Dendritic cell treated with granulocyte-macrophage colony-stimulating factor and Interleukin-4, amounts not matched to agents 40 ng/mL and 50 ng/mL, for 4 days (primary cell): ENCODE measurements at regions of chr4 and their contacts with region 1.

Region 1: DNA sequence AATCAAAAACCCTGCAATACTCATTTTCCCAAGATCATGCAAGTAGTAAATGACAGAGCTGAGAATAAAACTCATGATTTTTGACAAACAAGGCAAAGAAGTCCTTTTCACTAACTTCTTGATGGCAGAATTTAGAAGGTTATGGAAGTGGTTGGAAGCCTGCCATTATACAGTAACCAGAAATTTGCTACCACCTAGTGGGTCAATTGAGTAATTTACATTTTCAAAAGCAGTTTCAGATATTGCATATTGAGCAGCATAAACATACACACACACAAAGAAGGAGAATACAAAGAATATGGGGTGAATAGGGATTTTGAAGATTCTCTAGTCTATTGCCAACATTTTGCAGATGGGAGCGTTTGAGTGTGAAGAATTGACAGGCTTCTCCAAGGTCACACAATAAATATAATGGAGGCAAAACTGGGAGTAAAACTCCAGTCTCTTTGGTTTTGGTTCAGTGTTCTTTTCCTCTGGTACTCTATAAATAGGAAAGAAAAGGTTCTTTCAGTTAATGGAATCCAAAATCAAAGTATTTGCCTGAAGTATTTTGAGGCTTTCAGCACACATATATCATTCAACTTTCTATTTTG is 70.2 kb downstream of the GC start:
- H3K4me3 Mint-ChIP-seq: no peak overlapping the region
- H3K27ac Mint-ChIP-seq: no peak overlapping the region
- H3K4me1 Mint-ChIP-seq: no peaks in the 10 kb centered on the region
- H3K27me3 Mint-ChIP-seq: no peaks in the 10 kb centered on the region

Region 2: GRCh38 chr4:70601422-70602039 is 1112.2 kb before region 1 on chr4:
- intact Hi-C with region 1: loop called (anchors 2 kb)
- H3K4me3 Mint-ChIP-seq: no peak overlapping the region
- H3K27ac Mint-ChIP-seq: no peak overlapping the region
- H3K4me1 Mint-ChIP-seq: no peaks in the 10 kb centered on the region
- H3K27me3 Mint-ChIP-seq: no peaks in the 10 kb centered on the region

Region 3: GRCh38 chr4:70651864-70652506 is 1061.7 kb before region 1 on chr4:
- intact Hi-C with region 1: loop called (anchors 5 kb)
- H3K4me3 Mint-ChIP-seq: no peak overlapping the region
- H3K27ac Mint-ChIP-seq: no peak overlapping the region
- H3K4me1 Mint-ChIP-seq: peaks cover 8% of the 10 kb centered on the region
- H3K27me3 Mint-ChIP-seq: peaks cover 3% of the 10 kb centered on the region

Region 4: GRCh38 chr4:71184195-71184781 is 529.4 kb before region 1 on chr4:
- intact Hi-C with region 1: loop called (anchors 2 kb)
- H3K4me3 Mint-ChIP-seq: no peak overlapping the region
- H3K27ac Mint-ChIP-seq: no peak overlapping the region
- H3K4me1 Mint-ChIP-seq: peaks cover 22% of the 10 kb centered on the region
- H3K27me3 Mint-ChIP-seq: peaks cover 41% of the 10 kb centered on the region

Region 5: GRCh38 chr4:71229477-71230270 is 484.0 kb before region 1 on chr4:
- intact Hi-C with region 1: loop called (anchors 2 kb)
- H3K4me3 Mint-ChIP-seq: no peak overlapping the region
- H3K27ac Mint-ChIP-seq: no peak overlapping the region
- H3K4me1 Mint-ChIP-seq: no peaks in the 10 kb centered on the region
- H3K27me3 Mint-ChIP-seq: peaks cover 14% of the 10 kb centered on the region

Region 6: GRCh38 chr4:71270901-71271300 is 442.8 kb before region 1 on chr4:
- intact Hi-C with region 1: loop called (anchors 2 kb)
- H3K4me3 Mint-ChIP-seq: no peak overlapping the region
- H3K27ac Mint-ChIP-seq: no peak overlapping the region
- H3K4me1 Mint-ChIP-seq: no peaks in the 10 kb centered on the region
- H3K27me3 Mint-ChIP-seq: peaks cover 17% of the 10 kb centered on the region

Region 7: DNA sequence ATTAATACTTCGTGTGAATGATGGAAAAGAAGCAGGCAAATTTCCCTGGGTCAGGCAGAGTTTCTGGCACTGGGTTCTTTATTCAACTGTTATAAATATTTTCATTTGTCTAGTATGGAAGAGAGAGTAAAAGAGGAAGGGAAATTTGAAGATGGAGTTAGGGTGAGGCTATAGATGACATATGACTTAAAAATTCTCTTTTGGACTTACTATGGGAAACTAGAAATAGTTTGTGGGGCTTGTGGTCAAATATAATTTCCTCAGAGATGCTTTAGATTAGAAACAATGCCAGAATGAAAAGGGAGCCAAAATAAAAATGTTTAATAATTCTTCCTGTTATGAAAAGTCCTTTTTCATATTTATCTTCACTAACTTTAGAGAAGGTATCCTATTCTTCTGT is 33.0 kb before region 1 on chr4:
- intact Hi-C with region 1: no loop called
- H3K4me3 Mint-ChIP-seq: no peak overlapping the region
- H3K27ac Mint-ChIP-seq: no peak overlapping the region
- H3K4me1 Mint-ChIP-seq: no peaks in the 10 kb centered on the region
- H3K27me3 Mint-ChIP-seq: peaks cover 2% of the 10 kb centered on the region

Region 8: DNA sequence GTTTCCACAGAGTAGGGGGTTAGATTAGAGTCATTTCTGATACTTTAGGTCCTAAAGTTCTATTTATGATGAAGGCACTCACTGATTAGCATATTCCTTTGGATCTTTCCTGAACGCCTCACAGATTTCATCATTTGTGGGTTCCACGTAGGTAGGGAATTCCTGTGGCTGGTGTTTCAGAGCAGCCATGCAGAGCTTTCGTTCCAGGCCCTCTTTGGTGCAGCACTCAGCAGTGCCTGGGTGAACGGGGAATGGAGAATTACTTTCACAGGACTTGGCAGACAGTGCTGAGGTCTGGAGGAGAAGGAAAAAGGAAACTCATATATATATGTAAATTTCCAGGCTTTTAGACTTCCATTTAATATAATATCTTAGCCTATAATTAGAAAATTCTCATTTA is 51.6 kb after region 1 on chr4:
- intact Hi-C with region 1: no loop called
- H3K4me3 Mint-ChIP-seq: no peak overlapping the region
- H3K27ac Mint-ChIP-seq: no peak overlapping the region
- H3K4me1 Mint-ChIP-seq: no peaks in the 10 kb centered on the region
- H3K27me3 Mint-ChIP-seq: no peaks in the 10 kb centered on the region